Sigmoid colon (tissue), 7 donors: ENCODE measurements at regions of chr1 and their contacts with region 1.

Region 1: GRCh38 chr1:233790662-233791375 is 113.7 kb upstream of the SLC35F3 start:
- DNase-seq: no peak
- H3K4me3 ChIP-seq: no peak overlapping the region
- H3K27ac ChIP-seq: no peak overlapping the region
- H3K4me1 ChIP-seq: no peaks in the 10 kb centered on the region
- H3K27me3 ChIP-seq: peaks cover 0 to 5% (median 0%) of the 10 kb centered on the region in 3 donors
- CTCF ChIP-seq: peak; percentile 19 to 81 (median 72)
- EP300 ChIP-seq: no peak
- POLR2A ChIP-seq: no peak

Region 2: GRCh38 chr1:233304489-233305102 is 486.2 kb before region 1 on chr1:
- intact Hi-C with region 1: loop called (anchors 10 kb)
- DNase-seq: no peak
- H3K4me3 ChIP-seq: no peak overlapping the region
- H3K27ac ChIP-seq: no peak overlapping the region
- H3K4me1 ChIP-seq: no peaks in the 10 kb centered on the region
- H3K27me3 ChIP-seq: no peaks in the 10 kb centered on the region
- CTCF ChIP-seq: peak in 3 of 4 experiments; percentile 38 to 61 (median 49)
- EP300 ChIP-seq: no peak
- POLR2A ChIP-seq: no peak

Region 3: GRCh38 chr1:233440951-233441401 is 349.8 kb before region 1 on chr1:
- intact Hi-C with region 1: loop called (anchors 2 kb)
- DNase-seq: no peak
- H3K4me3 ChIP-seq: no peak overlapping the region
- H3K27ac ChIP-seq: no peak overlapping the region
- H3K4me1 ChIP-seq: peaks cover 0 to 6% (median 0%) of the 10 kb centered on the region in 4 donors
- H3K27me3 ChIP-seq: peaks cover 0 to 13% (median 0%) of the 10 kb centered on the region in 3 donors
- CTCF ChIP-seq: peak in 3 of 4 experiments; percentile 32 to 52 (median 33)
- EP300 ChIP-seq: no peak
- POLR2A ChIP-seq: no peak

Region 4: GRCh38 chr1:233897325-233898162 is 106.7 kb after region 1 on chr1:
- intact Hi-C with region 1: no loop called
- DNase-seq: no peak
- H3K4me3 ChIP-seq: no peak overlapping the region
- H3K27ac ChIP-seq: no peak overlapping the region
- H3K4me1 ChIP-seq: no peaks in the 10 kb centered on the region
- H3K27me3 ChIP-seq: no peaks in the 10 kb centered on the region
- CTCF ChIP-seq: no peak
- EP300 ChIP-seq: no peak
- POLR2A ChIP-seq: no peak